Activated T-helper 1 cell treated with anti-CD3 and anti-CD28 coated beads, Interleukin-12 subunit alpha, Interleukin-12 subunit beta, Interleukin-2, Interleukin-4 antibody, amounts not matched to agents 30 ng/mL and 10 ng/mL and 1 ng/mL, durations not matched to agents 14 hours and 24 hours and 36 hours (primary cell): ENCODE measurements at regions of chr20 and their contacts with region 1.

Region 1: GRCh38 chr20:36605399-36606157 is at the start of gene RAB5IF:
- DNase-seq: peak; percentile 100
- H3K4me3 Mint-ChIP-seq: peak within 1 kb of the TSS; percentile 98
- H3K27ac Mint-ChIP-seq: peak within 1 kb of the TSS; percentile 94
- H3K4me1 Mint-ChIP-seq: peaks cover 32% of the 10 kb centered on the region
- H3K27me3 Mint-ChIP-seq: peaks cover 2% of the 10 kb centered on the region
- total RNA-seq, gene RAB5IF: 112 and 119 TPM in 2 replicates

Region 2: GRCh38 chr20:36439040-36439730 is 166.4 kb before region 1 on chr20:
- intact Hi-C with region 1: loop called (anchors 1 kb)
- DNase-seq: peak; percentile 54
- H3K4me3 Mint-ChIP-seq: no peak overlapping the region
- H3K27ac Mint-ChIP-seq: no peak overlapping the region
- H3K4me1 Mint-ChIP-seq: peaks cover 4% of the 10 kb centered on the region
- H3K27me3 Mint-ChIP-seq: peaks cover 10% of the 10 kb centered on the region

Region 3: DNA sequence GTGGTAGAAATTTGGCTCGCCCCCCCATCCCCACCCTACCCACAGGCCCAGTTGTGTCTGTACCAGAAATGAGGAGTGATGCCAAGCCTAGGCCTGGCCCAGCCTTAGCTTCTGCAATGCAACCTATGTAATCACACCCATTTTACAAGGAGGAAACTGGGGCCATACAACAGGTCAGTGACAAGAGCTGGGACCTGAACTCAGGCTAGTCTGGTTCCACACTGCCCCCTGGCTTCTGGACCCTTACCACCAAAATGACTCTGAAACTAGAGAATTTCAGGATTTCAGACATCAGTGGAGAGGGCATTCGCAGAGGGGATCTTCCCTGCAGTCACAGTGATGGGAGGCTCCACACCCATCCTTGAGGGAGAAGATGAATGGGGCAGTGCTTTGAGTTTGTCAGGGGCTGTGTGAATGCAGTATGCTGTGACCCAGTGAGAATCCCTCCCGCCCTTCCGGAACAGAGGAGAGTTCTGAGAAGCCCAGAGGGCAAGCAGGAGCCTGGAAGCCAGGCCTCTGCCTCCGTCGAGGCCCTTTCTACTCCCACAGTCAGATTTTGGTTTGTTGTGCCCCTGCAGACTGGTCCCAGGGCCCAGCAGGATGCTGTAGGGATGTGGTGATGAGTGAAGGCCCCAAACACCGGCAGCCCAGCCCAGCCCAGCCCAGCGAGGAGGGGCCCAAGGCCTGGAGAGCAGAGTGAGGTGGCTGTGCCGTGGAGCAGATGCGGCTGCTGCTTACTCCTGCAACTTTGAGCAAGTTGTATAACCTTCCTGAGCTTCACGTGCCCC is 112.4 kb before region 1 on chr20:
- intact Hi-C with region 1: no loop called
- DNase-seq: no peak
- H3K4me3 Mint-ChIP-seq: no peak overlapping the region
- H3K27ac Mint-ChIP-seq: no peak overlapping the region
- H3K4me1 Mint-ChIP-seq: peaks cover 30% of the 10 kb centered on the region
- H3K27me3 Mint-ChIP-seq: no peaks in the 10 kb centered on the region

Region 4: DNA sequence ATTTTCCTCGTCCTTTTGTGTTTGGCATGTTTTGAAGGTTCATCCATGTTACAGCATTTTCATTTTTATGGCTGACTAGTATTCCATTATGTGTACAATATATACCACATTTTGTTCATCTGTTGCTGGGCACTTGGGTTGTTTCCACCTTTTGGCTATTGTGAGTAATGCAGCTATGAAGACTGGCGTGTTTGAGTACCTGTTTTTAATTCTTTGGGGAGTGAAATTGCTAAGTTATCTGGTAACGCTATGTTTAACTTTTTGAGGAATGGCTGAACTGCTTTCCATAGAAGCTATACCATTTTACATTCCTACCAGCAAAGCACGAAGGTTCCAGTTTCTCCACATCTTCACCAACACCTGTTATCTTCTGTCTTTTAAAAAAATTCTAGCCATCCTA is 101.3 kb before region 1 on chr20:
- intact Hi-C with region 1: no loop called
- DNase-seq: no peak
- H3K4me3 Mint-ChIP-seq: no peak overlapping the region
- H3K27ac Mint-ChIP-seq: no peak overlapping the region
- H3K4me1 Mint-ChIP-seq: peaks cover 11% of the 10 kb centered on the region
- H3K27me3 Mint-ChIP-seq: no peaks in the 10 kb centered on the region

Region 5: GRCh38 chr20:36550797-36551299 is 54.7 kb before region 1 on chr20:
- intact Hi-C with region 1: loop called (anchors 1 kb)
- DNase-seq: no peak
- H3K4me3 Mint-ChIP-seq: no peak overlapping the region
- H3K27ac Mint-ChIP-seq: no peak overlapping the region
- H3K4me1 Mint-ChIP-seq: no peaks in the 10 kb centered on the region
- H3K27me3 Mint-ChIP-seq: no peaks in the 10 kb centered on the region

Region 6: GRCh38 chr20:36573103-36573794 is 32.3 kb before region 1 on chr20 and contains the start of gene TGIF2:
- intact Hi-C with region 1: loop called (anchors 1 kb)
- DNase-seq: peak; percentile 79
- H3K4me3 Mint-ChIP-seq: peak within 1 kb of the TSS; percentile 96
- H3K27ac Mint-ChIP-seq: peak within 1 kb of the TSS; percentile 97
- H3K4me1 Mint-ChIP-seq: peaks cover 37% of the 10 kb centered on the region
- H3K27me3 Mint-ChIP-seq: peaks cover 3% of the 10 kb centered on the region
- total RNA-seq, gene TGIF2: 50.9 and 55.4 TPM in 2 replicates

Region 7: GRCh38 chr20:36591854-36592641 is 13.5 kb before region 1 on chr20:
- intact Hi-C with region 1: loop called (anchors 1 kb)
- DNase-seq: peak; percentile 36
- H3K4me3 Mint-ChIP-seq: peak overlapping the region; percentile 27
- H3K27ac Mint-ChIP-seq: peak overlapping the region; percentile 77
- H3K4me1 Mint-ChIP-seq: peaks cover 62% of the 10 kb centered on the region
- H3K27me3 Mint-ChIP-seq: no peaks in the 10 kb centered on the region

Region 8: DNA sequence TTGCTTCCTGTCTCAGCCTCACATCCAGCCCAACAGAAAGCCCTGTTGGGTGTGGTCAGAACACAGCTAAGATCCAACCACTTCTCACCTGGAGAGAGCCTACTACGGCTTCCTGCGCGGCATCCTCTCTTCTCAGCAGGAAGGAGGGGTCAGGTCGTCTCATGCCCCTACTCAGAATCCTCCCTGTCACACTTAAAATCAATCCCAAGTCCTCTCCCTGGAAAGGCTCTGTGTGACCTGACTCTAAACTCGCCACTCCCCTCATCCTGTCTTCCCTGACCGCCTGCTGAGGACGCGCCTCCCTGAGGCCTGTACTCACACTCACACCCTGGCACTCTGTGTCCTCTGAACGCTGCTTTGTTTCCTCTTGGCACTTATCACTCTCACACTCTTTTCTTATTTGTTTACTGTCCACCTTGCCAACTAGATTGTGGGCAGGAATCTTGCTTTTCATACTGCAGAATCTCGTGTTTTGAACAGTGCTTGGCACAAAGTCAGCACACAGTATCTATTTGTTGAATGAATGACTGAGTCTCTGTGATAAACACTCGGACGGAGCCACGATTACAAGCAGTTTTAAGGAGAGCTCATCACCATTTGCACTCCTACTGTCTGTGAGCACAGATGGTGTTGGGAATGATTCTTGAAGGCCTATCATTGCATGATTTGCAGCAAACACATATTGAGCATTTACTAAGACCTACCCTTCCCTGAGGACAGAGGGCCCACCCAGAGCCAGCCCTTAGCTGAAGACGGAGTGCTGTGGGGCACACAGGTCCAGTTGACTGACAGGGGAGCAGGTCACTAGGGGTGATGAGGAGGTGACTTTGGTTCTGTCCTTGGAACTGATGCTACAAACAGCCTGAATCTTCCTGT is 18.7 kb after region 1 on chr20:
- intact Hi-C with region 1: no loop called
- DNase-seq: no peak
- H3K4me3 Mint-ChIP-seq: no peak overlapping the region
- H3K27ac Mint-ChIP-seq: peak overlapping the region; percentile 56
- H3K4me1 Mint-ChIP-seq: peaks cover 46% of the 10 kb centered on the region
- H3K27me3 Mint-ChIP-seq: no peaks in the 10 kb centered on the region

Region 9: DNA sequence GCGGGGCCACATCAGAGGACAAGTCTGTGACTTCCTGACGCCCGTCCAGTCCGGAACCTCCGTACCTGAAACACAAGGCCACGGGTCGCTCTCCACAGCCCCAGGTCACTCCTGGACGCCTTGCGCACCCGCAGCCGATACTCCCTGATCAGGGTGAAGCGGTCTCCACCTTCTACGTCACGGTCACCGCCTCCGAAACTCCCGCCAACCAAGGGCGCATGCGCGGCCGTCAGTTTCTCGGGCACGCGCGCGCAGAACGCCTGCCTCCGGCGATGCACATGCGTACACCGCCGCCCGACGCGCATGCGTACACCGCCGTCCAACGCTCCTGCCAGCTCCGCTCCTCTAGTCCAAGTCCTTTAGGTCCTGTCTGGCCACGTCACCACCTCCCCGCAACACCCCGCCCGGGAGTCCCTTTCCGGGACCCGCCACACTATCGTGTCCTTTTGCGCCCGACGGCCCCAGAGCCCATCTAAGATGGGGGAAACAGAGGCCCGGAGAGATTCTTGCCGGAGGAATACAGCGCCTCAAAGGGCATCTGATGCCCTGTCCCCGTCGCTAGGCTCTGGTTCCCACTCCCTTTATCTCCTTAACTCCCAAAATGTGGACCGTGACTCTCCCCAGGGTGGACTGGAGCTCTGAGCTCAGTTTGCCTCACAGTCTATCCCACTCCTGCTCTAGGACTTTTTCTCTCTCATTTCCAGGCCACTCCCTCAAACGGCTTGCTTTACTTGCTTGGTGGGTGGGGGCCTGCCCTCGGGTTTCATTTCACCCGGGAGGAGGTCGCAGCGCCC is 168.2 kb after region 1 on chr20 and contains the start of gene DSN1:
- intact Hi-C with region 1: loop called (anchors 1 kb)
- DNase-seq: peak; percentile 98
- H3K4me3 Mint-ChIP-seq: peak within 1 kb of the TSS; percentile 86
- H3K27ac Mint-ChIP-seq: peak within 1 kb of the TSS; percentile 95
- H3K4me1 Mint-ChIP-seq: peaks cover 48% of the 10 kb centered on the region
- H3K27me3 Mint-ChIP-seq: peaks cover 6% of the 10 kb centered on the region
- total RNA-seq, gene DSN1: 23.2 and 29.0 TPM in 2 replicates

Region 10: DNA sequence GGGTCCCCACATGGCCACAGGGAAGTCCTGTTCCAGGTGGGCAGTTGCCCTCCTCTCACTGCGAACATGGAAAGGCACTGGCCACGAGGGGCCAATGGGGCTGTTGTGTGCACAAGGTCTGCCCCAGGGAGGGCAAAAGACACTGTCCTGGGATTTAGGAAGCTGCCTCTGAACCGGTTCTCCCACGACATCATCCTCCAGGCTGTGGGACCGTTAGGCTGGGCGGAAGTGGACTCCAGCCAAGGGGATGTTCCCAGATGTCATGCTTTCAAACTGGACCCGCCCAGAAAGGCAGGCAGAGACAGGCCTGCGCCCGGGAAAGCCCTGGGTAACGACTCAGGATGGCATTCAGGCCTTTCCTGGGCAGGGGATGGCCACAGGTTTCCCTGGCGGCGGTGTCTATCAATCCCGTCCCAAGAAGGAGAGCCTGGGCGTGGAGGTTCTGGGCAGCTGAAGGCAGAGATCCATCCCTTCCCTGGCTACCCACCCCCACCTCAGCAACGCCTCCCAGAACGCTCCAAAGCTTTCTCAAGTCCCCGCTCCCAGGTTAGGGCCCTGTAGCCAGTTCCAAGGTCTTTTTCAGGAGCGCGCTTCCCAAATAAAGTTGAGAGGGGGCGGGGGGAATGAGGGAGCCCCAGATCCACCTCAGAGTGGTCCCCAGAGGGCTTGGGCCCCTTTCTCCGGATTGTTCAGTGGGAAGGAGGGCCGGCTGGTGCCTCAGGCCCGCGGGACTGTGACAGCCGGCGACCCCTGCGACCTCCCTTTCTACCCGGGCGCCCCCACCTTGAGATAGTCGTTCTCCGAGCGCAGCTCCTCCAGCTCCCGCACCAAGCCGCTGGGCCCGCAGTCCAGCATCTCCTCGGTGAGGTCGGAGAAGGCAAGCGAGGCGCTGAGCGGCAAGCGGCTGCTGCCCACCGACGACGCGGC is 256.6 kb after region 1 on chr20:
- intact Hi-C with region 1: loop called (anchors 10 kb)
- DNase-seq: no peak
- H3K4me3 Mint-ChIP-seq: peak overlapping the region; percentile 63
- H3K27ac Mint-ChIP-seq: no peak overlapping the region
- H3K4me1 Mint-ChIP-seq: peaks cover 12% of the 10 kb centered on the region
- H3K27me3 Mint-ChIP-seq: peaks cover 52% of the 10 kb centered on the region